PC-9 (cell line): ENCODE measurements at regions of chr3 and their contacts with region 1.

Region 1: GRCh38 chr3:129867506-129868124 is 25.9 kb downstream of the TMCC1 start:
- DNase-seq: no peak
- H3K4me3 ChIP-seq: no peak overlapping the region
- H3K27ac ChIP-seq: no peak overlapping the region
- H3K4me1 ChIP-seq: no peaks in the 10 kb centered on the region
- H3K27me3 ChIP-seq: no peaks in the 10 kb centered on the region
- CTCF ChIP-seq: no peak

Region 2: DNA sequence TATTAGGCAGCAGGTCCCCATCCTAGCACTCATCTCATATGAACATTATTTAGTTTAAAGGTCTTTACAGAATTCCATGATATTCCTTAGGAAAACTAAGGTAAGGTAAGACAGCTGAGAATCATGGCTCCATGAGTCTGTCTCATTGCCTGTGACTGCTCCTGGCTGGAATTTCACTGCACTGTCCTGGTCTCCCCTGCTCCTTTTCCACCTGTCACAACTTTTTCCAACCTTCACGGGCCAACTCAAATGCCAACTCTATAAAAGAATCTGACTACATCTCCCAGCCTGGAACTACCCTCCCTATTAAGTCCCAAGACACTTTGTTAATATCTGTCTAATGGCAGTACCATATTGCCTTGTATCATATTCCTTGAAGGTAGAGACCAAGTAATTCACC is 691.6 kb before region 1 on chr3:
- CTCF ChIA-PET with region 1: no interaction called
- POLR2A ChIA-PET with region 1: no interaction called
- intact Hi-C with region 1: no loop called
- DNase-seq: no peak
- H3K4me3 ChIP-seq: no peak overlapping the region
- H3K27ac ChIP-seq: no peak overlapping the region
- H3K4me1 ChIP-seq: peaks cover 22% of the 10 kb centered on the region
- H3K27me3 ChIP-seq: no peaks in the 10 kb centered on the region
- CTCF ChIP-seq: no peak

Region 3: DNA sequence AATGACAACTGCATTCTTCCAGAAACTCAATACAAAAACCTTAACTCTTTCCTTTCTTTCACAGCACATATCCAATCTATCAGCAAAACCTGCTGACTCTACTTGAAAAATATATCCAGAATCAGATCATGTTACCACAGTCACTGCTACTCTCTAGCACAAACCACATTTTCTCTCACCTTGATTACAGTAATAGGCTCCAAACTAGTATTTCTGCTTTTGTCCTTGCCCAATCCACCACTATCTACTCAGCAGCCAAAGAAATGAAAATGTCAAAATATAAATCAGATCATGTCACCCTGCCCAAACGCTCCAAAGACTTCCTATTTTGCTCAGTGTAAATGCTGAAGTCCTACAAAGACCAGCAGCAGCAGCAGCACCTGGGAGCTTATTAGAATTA is 10.8 kb after region 1 on chr3:
- CTCF ChIA-PET with region 1: no interaction called
- POLR2A ChIA-PET with region 1: interaction called, 11 read pairs
- intact Hi-C with region 1: no loop called
- DNase-seq: peak; percentile 7 to 79
- H3K4me3 ChIP-seq: no peak overlapping the region
- H3K27ac ChIP-seq: peak overlapping the region; percentile 29
- H3K4me1 ChIP-seq: peaks cover 19% of the 10 kb centered on the region
- H3K27me3 ChIP-seq: no peaks in the 10 kb centered on the region
- CTCF ChIP-seq: no peak

Region 4: GRCh38 chr3:131174752-131175151 is 1307.1 kb after region 1 on chr3:
- CTCF ChIA-PET with region 1: no interaction called
- POLR2A ChIA-PET with region 1: no interaction called
- intact Hi-C with region 1: no loop called
- DNase-seq: peak in 1 of 2 experiments; percentile 35
- H3K4me3 ChIP-seq: no peak overlapping the region
- H3K27ac ChIP-seq: no peak overlapping the region
- H3K4me1 ChIP-seq: no peaks in the 10 kb centered on the region
- H3K27me3 ChIP-seq: no peaks in the 10 kb centered on the region
- CTCF ChIP-seq: no peak